HepG2 (cell line): ENCODE measurements at regions of chr3 and their contacts with region 1.

Region 1: GRCh38 chr3:73192035-73192738 is 130.7 kb downstream of the EBLN2 start:
- DNase-seq: peak; percentile 58
- ATAC-seq: peak; percentile 100
- H3K4me3 ChIP-seq: no peak overlapping the region
- H3K27ac ChIP-seq: no peak overlapping the region
- H3K4me1 ChIP-seq: no peaks in the 10 kb centered on the region
- H3K27me3 ChIP-seq: no peaks in the 10 kb centered on the region
- CTCF ChIP-seq: peak; percentile 40
- EP300 ChIP-seq: no peak
- POLR2A ChIP-seq: no peak
- RAD21 ChIP-seq: peak; percentile 46; the same call in 1 of the 2 replicates

Region 2: GRCh38 chr3:73175698-73176097 is 16.5 kb before region 1 on chr3:
- CTCF ChIA-PET with region 1: no interaction called
- POLR2A ChIA-PET with region 1: no interaction called
- in situ Hi-C with region 1: no loop called
- intact Hi-C with region 1: no loop called
- DNase-seq: no peak
- ATAC-seq: no peak
- H3K4me3 ChIP-seq: no peak overlapping the region
- H3K27ac ChIP-seq: no peak overlapping the region
- H3K4me1 ChIP-seq: no peaks in the 10 kb centered on the region
- H3K27me3 ChIP-seq: no peaks in the 10 kb centered on the region; a peak in 2 of 5 replicates
- CTCF ChIP-seq: no peak
- EP300 ChIP-seq: no peak
- POLR2A ChIP-seq: no peak
- RAD21 ChIP-seq: no peak

Region 3: GRCh38 chr3:73389117-73389813 is 197.1 kb after region 1 on chr3:
- CTCF ChIA-PET with region 1: no interaction called
- POLR2A ChIA-PET with region 1: no interaction called
- in situ Hi-C with region 1: no loop called
- intact Hi-C with region 1: loop called (anchors 5 kb)
- DNase-seq: no peak
- ATAC-seq: no peak
- H3K4me3 ChIP-seq: no peak overlapping the region
- H3K27ac ChIP-seq: no peak overlapping the region
- H3K4me1 ChIP-seq: no peaks in the 10 kb centered on the region
- H3K27me3 ChIP-seq: no peaks in the 10 kb centered on the region
- CTCF ChIP-seq: no peak
- EP300 ChIP-seq: no peak
- POLR2A ChIP-seq: no peak
- RAD21 ChIP-seq: no peak